MCF 10A (cell line): ENCODE measurements at regions of chr17 and their contacts with region 1.

Region 1: DNA sequence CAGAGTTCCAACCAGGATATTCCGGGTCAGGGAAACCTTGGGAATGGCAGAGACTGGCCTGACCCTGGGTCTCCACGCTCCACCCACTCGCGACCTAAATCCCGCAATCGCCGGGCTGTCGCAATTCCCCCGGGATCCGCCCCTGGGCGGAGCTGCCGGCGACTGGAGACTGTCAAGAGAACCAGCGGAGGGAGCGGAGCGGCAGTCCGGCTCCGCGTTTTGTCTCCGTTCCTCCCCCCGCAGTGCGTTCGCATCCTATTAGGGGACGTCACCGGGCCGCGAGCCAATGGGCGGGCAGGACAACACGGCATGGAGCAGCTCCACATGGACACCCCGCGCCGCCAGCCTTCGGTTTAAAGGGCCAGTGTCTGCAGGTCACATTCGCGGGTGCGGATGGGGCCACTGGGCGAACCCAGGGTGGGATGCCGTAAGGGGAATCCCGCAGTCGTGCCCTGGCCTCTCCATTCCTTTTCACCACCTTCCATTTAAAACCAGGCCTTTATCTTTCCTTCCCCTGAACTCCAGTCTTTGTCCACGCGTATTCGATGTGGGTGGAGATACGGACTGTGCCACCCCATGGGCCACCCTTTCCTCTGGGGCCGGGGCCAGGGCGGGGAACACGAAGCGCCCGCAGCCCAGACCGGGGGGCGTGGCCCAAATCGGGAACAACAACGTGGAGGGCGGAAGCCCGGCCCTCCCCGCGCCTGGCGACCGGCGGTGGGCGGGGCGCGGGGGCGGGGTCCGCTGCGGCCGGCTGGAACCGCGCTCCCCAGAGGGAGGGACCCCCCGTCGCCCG is 764 bp upstream of the MNT start:
- DNase-seq: peak; percentile 99
- H3K4me3 Mint-ChIP-seq: peak overlapping the region; percentile 87
- H3K27ac Mint-ChIP-seq: peak overlapping the region; percentile 99
- H3K4me1 Mint-ChIP-seq: peaks cover 49% of the 10 kb centered on the region
- H3K27me3 Mint-ChIP-seq: no peaks in the 10 kb centered on the region
- CTCF ChIP-seq: no peak

Region 2: DNA sequence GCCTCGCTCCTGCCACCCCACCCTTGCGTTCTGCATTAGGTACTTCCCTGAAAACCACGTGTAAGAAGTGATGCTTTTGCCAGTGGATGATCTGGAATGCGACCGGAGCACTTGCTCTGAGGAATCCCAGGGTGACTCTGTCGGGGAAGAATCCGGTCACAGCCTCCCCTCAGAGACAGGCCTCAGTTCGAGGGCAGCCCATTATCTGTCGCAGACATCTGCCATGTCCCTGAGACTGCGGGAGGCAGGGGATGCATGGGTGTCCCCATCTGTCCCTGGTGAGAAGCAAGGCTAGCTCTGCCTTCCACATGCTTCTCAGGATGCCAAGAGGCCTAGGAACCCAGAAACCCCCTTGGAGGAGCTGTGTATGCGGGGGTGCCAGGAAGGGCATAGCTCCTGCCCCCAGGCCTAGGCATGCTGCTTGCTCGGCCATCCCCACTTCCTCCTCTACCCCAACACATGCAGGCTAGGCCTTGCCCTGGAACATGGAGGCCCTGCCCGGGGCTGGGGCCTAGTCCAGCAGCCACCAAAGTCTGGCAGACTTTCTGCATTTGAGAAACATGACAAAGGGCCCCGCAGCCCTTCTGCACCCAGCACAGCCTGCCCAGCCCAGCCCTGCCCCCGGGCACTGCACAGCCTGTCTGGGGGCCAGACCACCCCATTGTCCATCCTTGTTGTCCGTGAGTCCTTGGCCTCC is 21.2 kb before region 1 on chr17:
- CTCF ChIA-PET with region 1: interaction called, 309 read pairs
- POLR2A ChIA-PET with region 1: interaction called, 15 read pairs
- intact Hi-C with region 1: no loop called
- DNase-seq: no peak
- H3K4me3 Mint-ChIP-seq: no peak overlapping the region
- H3K27ac Mint-ChIP-seq: no peak overlapping the region
- H3K4me1 Mint-ChIP-seq: no peaks in the 10 kb centered on the region
- H3K27me3 Mint-ChIP-seq: no peaks in the 10 kb centered on the region
- CTCF ChIP-seq: no peak

Region 3: DNA sequence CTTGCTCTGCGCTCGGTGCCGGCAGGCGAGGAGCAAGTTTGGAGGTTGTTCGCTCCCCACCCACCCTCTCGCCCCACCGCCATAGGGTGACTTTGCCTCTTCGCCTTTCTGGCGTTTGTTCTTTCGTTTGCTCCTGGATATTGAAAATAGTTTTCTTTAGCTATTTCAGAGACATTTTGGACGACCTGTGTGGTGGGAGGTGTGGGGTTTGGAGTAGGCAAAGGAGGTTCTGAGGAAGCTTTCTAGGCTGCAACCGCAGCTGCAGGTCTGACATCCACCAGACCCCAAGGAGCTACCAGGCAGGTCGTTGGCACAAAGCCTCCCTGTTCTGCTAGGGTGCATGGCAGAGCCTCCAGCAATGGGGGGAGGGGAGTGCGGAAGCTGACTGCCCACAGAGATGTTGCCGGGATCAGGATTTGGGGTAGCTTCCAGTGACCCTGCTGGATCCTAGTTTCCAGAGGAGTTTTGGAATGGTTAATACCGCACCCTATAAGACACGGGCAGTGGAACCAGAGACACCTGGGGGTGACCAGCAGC is 453.0 kb after region 1 on chr17:
- CTCF ChIA-PET with region 1: no interaction called
- POLR2A ChIA-PET with region 1: no interaction called
- intact Hi-C with region 1: no loop called
- DNase-seq: peak; percentile 14
- H3K4me3 Mint-ChIP-seq: peak overlapping the region; percentile 78
- H3K27ac Mint-ChIP-seq: no peak overlapping the region
- H3K4me1 Mint-ChIP-seq: peaks cover 9% of the 10 kb centered on the region
- H3K27me3 Mint-ChIP-seq: no peaks in the 10 kb centered on the region
- CTCF ChIP-seq: no peak